Activated B cell treated with CpG ODN at 0.5 μM for 24 hours (primary cell): ENCODE measurements at regions of chr2 and their contacts with region 1.

Region 1: DNA sequence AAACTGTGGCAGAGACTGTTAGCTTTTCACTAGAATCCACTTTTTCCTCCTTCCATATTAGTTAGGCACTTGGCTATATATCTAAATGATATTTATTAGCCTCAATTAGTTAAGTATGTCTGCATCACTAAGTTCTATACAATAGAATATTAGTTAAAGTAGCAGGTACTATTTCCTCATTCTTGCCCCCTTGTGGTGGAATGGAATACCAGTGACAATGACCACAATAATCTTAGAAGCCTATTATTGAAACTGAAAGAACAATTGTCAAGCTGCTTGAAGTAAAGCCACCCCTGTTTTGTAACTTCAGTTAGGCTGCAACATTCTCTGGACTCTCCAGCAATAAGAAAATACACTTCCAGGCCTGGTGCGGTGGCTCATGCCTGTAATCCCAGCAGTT is 476.3 kb upstream of the VWC2L start:
- DNase-seq: no peak
- ATAC-seq: no peak
- H3K4me3 Mint-ChIP-seq: no peak overlapping the region
- H3K27ac Mint-ChIP-seq: no peak overlapping the region
- H3K4me1 Mint-ChIP-seq: no peaks in the 10 kb centered on the region
- H3K27me3 Mint-ChIP-seq: peaks cover 4% of the 10 kb centered on the region
- CTCF ChIP-seq: no peak

Region 2: GRCh38 chr2:212686285-212686895 is 1248.2 kb before region 1 on chr2:
- CTCF ChIA-PET with region 1: interaction called, 4 read pairs
- POLR2A ChIA-PET with region 1: no interaction called
- intact Hi-C with region 1: loop called (anchors 1 kb)
- DNase-seq: no peak
- ATAC-seq: peak; percentile 45
- H3K4me3 Mint-ChIP-seq: no peak overlapping the region
- H3K27ac Mint-ChIP-seq: no peak overlapping the region
- H3K4me1 Mint-ChIP-seq: no peaks in the 10 kb centered on the region
- H3K27me3 Mint-ChIP-seq: peaks cover 4% of the 10 kb centered on the region
- CTCF ChIP-seq: peak; percentile 81

Region 3: GRCh38 chr2:212777020-212777491 is 1157.5 kb before region 1 on chr2:
- CTCF ChIA-PET with region 1: no interaction called
- POLR2A ChIA-PET with region 1: no interaction called
- intact Hi-C with region 1: loop called (anchors 2 kb)
- DNase-seq: no peak
- ATAC-seq: peak; percentile 52
- H3K4me3 Mint-ChIP-seq: no peak overlapping the region
- H3K27ac Mint-ChIP-seq: no peak overlapping the region
- H3K4me1 Mint-ChIP-seq: peaks cover 3% of the 10 kb centered on the region
- H3K27me3 Mint-ChIP-seq: peaks cover 2% of the 10 kb centered on the region
- CTCF ChIP-seq: peak; percentile 73

Region 4: DNA sequence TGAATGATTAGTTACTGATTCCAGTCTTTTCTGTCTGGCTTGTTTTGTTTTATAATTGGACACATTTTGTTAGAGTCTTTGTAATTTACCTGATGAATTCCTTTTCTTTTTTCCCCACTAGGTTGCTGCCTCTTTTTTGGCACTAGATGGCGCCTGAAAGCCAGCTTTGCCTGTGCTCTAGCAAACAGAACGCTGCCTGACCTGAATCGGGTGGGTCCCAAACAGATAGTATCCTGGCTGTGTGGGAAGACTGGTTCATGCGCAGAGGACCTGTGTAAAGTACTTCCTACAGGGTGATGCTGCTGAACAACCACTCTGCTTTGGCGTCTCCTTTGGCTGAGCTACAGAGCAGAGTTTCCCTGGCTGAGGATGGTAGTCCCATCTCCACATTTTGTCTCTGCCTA is 1071.4 kb before region 1 on chr2:
- CTCF ChIA-PET with region 1: no interaction called
- POLR2A ChIA-PET with region 1: no interaction called
- intact Hi-C with region 1: loop called (anchors 2 kb)
- DNase-seq: no peak
- ATAC-seq: no peak
- H3K4me3 Mint-ChIP-seq: no peak overlapping the region
- H3K27ac Mint-ChIP-seq: no peak overlapping the region
- H3K4me1 Mint-ChIP-seq: no peaks in the 10 kb centered on the region
- H3K27me3 Mint-ChIP-seq: no peaks in the 10 kb centered on the region
- CTCF ChIP-seq: no peak

Region 5: GRCh38 chr2:213296270-213296669 is 638.3 kb before region 1 on chr2:
- CTCF ChIA-PET with region 1: no interaction called
- POLR2A ChIA-PET with region 1: no interaction called
- intact Hi-C with region 1: no loop called
- DNase-seq: no peak
- ATAC-seq: no peak
- H3K4me3 Mint-ChIP-seq: no peak overlapping the region
- H3K27ac Mint-ChIP-seq: no peak overlapping the region
- H3K4me1 Mint-ChIP-seq: no peaks in the 10 kb centered on the region
- H3K27me3 Mint-ChIP-seq: no peaks in the 10 kb centered on the region
- CTCF ChIP-seq: no peak

Region 6: GRCh38 chr2:214830794-214831346 is 896.3 kb after region 1 on chr2:
- CTCF ChIA-PET with region 1: no interaction called
- POLR2A ChIA-PET with region 1: no interaction called
- intact Hi-C with region 1: loop called (anchors 10 kb)
- DNase-seq: no peak
- ATAC-seq: no peak
- H3K4me3 Mint-ChIP-seq: no peak overlapping the region
- H3K27ac Mint-ChIP-seq: no peak overlapping the region
- H3K4me1 Mint-ChIP-seq: no peaks in the 10 kb centered on the region
- H3K27me3 Mint-ChIP-seq: no peaks in the 10 kb centered on the region
- CTCF ChIP-seq: no peak